Esophagus squamous epithelium (tissue), 5 donors: ENCODE measurements at regions of chr2 and their contacts with region 1.

Region 1: GRCh38 chr2:216519154-216519762 is 20.6 kb downstream of the RPL37A start:
- DNase-seq: no peak
- H3K4me3 ChIP-seq: no peak overlapping the region
- H3K27ac ChIP-seq: no peak overlapping the region
- H3K4me1 ChIP-seq: peaks cover 0 to 5% (median 0%) of the 10 kb centered on the region in 3 donors
- H3K27me3 ChIP-seq: no peaks in the 10 kb centered on the region
- CTCF ChIP-seq: peak; percentile 25 to 88 (median 81)
- POLR2A ChIP-seq: no peak

Region 2: GRCh38 chr2:216412022-216412999 is 106.9 kb before region 1 on chr2 and contains the start of gene SMARCAL1:
- intact Hi-C with region 1: no loop called
- DNase-seq: peak; percentile 96
- H3K4me3 ChIP-seq: peak within 1 kb of the TSS; percentile 57 to 82 (median 74)
- H3K27ac ChIP-seq: peak within 1 kb of the TSS; percentile 91 to 99 (median 96)
- H3K4me1 ChIP-seq: peaks cover 0 to 18% (median 7%) of the 10 kb centered on the region in 3 donors
- H3K27me3 ChIP-seq: peaks cover 0 to 11% (median 0%) of the 10 kb centered on the region in 4 donors
- CTCF ChIP-seq: peak in 1 of 6 experiments; percentile 13
- POLR2A ChIP-seq: peak in 1 of 4 donors; percentile 43
- total RNA-seq, gene SMARCAL1: 10.3 to 27.1 (median 18.1) TPM

Region 3: DNA sequence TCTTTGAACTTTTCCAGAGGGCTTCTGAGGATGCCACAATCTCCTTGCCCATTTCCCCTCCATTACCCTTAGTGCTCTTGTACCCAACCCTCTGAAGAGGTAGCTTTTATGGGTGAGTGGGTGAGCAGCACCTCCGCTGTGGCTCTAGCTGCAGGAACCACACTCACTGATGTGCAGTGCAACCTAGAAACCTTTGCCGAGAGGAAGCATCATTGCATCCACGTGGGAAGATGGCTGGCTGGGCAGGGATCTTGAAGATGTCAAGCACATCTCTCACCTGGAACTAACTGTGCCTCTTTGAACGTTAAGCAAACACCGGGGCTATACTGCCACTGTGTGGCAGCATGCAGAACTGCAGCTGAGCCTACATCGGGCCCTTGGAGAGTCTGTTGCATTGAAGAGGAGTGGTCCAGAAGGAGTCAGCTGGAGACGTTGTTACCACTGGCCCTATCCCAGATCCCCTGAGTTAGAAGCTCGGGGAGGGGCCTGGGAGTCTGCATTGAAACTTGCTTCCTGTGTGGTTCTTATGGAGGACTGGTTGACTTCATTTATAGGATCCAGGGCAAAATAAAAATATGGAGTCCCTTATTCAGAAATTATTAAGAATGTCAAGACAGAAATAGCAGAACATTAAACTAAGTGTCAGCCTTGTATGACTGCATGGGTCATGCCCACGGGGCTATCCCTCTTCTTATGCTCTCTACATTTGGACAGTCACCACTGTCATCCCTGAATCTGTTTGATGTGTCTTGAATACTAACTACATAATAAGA is 147.4 kb after region 1 on chr2:
- intact Hi-C with region 1: loop called (anchors 2 kb)
- DNase-seq: no peak
- H3K4me3 ChIP-seq: no peak overlapping the region
- H3K27ac ChIP-seq: no peak overlapping the region
- H3K4me1 ChIP-seq: peaks cover 14 to 26% (median 14%) of the 10 kb centered on the region in 3 donors
- H3K27me3 ChIP-seq: no peaks in the 10 kb centered on the region
- CTCF ChIP-seq: peak; percentile 82 to 99 (median 98)
- POLR2A ChIP-seq: no peak